ENCODE measurements at regions of chr17 and their contacts with region 1.

Region 1: GRCh38 chr17:17141860-17142552 is 64.1 kb downstream of the PLD6 start:
- DNase-seq: peak; percentile 50
- H3K4me3 ChIP-seq: no peak overlapping the region
- H3K27ac ChIP-seq: no peak overlapping the region
- H3K4me1 ChIP-seq: peaks cover 12% of the 10 kb centered on the region
- H3K27me3 ChIP-seq: no peaks in the 10 kb centered on the region
- CTCF ChIP-seq: peak; percentile 88 to 94
- POLR2A ChIP-seq: no peak

Region 2: GRCh38 chr17:16980813-16981731 is 160.9 kb before region 1 on chr17:
- CTCF ChIA-PET with region 1: no interaction called
- POLR2A ChIA-PET with region 1: no interaction called
- dilution Hi-C with region 1: no loop called
- intact Hi-C with region 1: no loop called
- DNase-seq: no peak
- H3K4me3 ChIP-seq: no peak overlapping the region
- H3K27ac ChIP-seq: no peak overlapping the region
- H3K4me1 ChIP-seq: no peaks in the 10 kb centered on the region
- H3K27me3 ChIP-seq: peaks cover 4 to 12% of the 10 kb centered on the region in 2 experiments
- CTCF ChIP-seq: no peak
- POLR2A ChIP-seq: no peak

Region 3: GRCh38 chr17:17129466-17129865 is 12.5 kb before region 1 on chr17:
- CTCF ChIA-PET with region 1: interaction called, 15 read pairs
- POLR2A ChIA-PET with region 1: no interaction called
- dilution Hi-C with region 1: no loop called
- intact Hi-C with region 1: no loop called
- DNase-seq: no peak
- H3K4me3 ChIP-seq: no peak overlapping the region
- H3K27ac ChIP-seq: no peak overlapping the region
- H3K4me1 ChIP-seq: no peaks in the 10 kb centered on the region
- H3K27me3 ChIP-seq: no peaks in the 10 kb centered on the region
- CTCF ChIP-seq: no peak
- POLR2A ChIP-seq: no peak

Region 4: DNA sequence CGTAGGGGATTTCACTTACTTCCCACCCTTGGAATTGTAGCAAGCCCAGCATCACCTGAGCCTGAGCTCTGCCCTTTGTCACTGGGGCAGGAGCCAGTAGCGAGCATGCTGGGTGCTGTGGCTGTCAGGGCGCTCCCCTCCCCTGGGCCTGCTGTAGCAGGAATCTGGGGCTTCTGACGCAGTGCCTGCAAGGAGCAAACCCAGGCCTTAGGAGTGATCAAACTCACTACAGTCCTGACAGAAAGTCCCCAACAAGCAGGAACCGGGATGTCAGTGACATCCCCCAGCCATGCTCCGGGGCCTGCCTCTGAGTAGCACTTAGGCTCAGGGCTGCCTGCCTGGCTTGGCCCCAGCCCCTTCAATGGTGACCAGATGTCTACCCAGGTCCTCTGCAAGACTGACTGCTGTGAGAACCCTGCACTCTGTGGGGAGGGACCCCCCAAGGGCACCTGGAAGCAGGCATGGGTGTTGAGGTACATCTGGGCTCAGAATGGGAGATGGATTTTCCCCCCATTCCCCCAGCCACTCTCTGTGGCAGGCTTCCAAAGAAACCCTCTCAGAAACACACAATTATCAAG is 40.7 kb after region 1 on chr17:
- CTCF ChIA-PET with region 1: interaction called, 13 read pairs
- POLR2A ChIA-PET with region 1: no interaction called
- dilution Hi-C with region 1: no loop called
- intact Hi-C with region 1: no loop called
- DNase-seq: no peak
- H3K4me3 ChIP-seq: no peak overlapping the region
- H3K27ac ChIP-seq: no peak overlapping the region
- H3K4me1 ChIP-seq: peaks cover 26% of the 10 kb centered on the region
- H3K27me3 ChIP-seq: no peaks in the 10 kb centered on the region
- CTCF ChIP-seq: no peak
- POLR2A ChIP-seq: no peak

Region 5: GRCh38 chr17:17237026-17237799 is 95.2 kb after region 1 on chr17 and contains the start of gene FLCN:
- CTCF ChIA-PET with region 1: interaction called, 23 read pairs
- POLR2A ChIA-PET with region 1: interaction called, 7 read pairs
- dilution Hi-C with region 1: no loop called
- intact Hi-C with region 1: loop called (anchors 2 kb)
- DNase-seq: peak; percentile 90
- H3K4me3 ChIP-seq: peak within 1 kb of the TSS; percentile 69 to 91 (median 71)
- H3K27ac ChIP-seq: peak within 1 kb of the TSS; percentile 98
- H3K4me1 ChIP-seq: peaks cover 10% of the 10 kb centered on the region
- H3K27me3 ChIP-seq: no peaks in the 10 kb centered on the region
- CTCF ChIP-seq: no peak
- POLR2A ChIP-seq: peak; percentile 83
- total RNA-seq, gene FLCN: 56.9 and 68.9 TPM in 2 replicates

Region 6: DNA sequence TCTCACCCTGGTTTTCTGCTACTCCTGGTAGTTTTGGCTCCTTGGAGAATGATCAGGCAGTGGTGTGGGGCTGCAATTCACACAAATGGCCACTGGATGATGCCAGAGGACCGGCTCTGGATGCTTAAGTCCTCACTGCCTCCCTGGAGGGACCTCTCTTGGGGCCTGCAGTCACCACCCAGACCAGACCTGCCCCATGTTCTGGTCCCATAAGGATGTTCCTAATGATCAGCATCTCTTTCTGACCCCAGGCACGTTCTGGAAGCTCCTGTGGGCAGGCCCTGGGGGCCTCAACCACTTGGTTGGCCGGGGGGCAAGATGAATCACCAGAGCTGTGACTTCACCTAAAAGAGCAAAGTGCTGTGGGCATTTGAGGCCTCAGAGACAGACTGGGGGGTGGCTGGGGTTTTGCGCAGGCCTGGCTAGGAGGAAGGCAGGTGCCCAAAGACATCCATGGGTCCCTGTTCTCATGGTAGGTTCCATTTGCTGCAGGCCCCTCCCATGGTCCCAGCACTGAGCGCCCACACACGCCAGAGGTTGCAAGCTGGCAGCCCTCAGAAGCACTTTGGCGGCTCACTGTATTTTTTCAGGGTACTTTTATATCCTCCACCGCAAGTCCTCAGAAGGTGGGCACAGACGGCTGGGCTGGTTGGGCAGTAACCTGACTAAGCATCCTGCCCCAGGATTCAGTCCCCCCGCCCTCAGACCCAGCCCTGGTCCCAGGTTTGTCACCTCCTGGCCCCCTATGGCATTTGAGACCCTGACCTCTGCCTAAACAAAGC is 214.3 kb after region 1 on chr17:
- CTCF ChIA-PET with region 1: interaction called, 5 read pairs
- POLR2A ChIA-PET with region 1: no interaction called
- dilution Hi-C with region 1: no loop called
- intact Hi-C with region 1: loop called (anchors 1 kb)
- DNase-seq: peak; percentile 82
- H3K4me3 ChIP-seq: no peak overlapping the region
- H3K27ac ChIP-seq: no peak overlapping the region
- H3K4me1 ChIP-seq: peaks cover 14% of the 10 kb centered on the region
- H3K27me3 ChIP-seq: no peaks in the 10 kb centered on the region
- CTCF ChIP-seq: peak; percentile 99 to 100
- POLR2A ChIP-seq: no peak